A673 (cell line): ENCODE measurements at regions of chr10 and their contacts with region 1.

Region 1: DNA sequence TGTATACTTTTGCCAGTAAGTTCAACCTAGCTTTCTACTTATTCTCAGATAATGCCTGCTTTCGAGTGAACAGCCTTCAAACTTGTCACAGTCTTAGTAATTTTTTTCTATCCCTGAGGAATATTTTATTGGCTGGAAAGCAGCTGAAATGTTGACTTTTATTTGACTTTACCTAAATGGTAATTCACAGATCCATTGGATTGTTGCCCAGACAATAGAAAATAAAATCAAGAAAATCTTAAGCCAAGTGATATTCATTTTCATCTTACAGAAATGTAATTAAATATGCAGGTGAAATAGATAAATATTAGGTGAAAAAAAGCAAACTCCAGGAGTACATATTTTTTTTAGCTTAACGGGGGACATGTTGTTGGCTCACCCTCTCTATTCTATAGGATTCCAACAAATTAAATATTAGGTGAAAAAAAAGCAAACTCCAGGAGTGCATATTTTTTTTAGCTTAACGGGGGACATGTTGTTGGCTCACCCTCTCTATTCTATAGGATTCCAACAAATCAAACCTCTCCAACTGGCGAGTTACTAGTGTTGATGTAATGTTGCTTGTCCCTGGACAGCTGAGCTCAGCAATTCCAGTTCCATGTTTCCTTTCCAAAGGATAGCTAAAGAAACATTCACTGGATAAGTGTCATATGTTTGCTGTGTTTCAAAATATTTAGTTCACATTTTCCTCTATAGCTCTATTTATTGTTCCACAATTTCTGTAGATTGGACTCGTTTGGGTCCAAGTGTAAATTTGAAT is 4.2 kb downstream of the TMEM26 start:
- DNase-seq: no peak
- H3K4me3 ChIP-seq: no peak overlapping the region
- H3K27ac ChIP-seq: no peak overlapping the region
- H3K4me1 ChIP-seq: peaks cover 10% of the 10 kb centered on the region
- H3K27me3 ChIP-seq: no peaks in the 10 kb centered on the region
- CTCF ChIP-seq: no peak

Region 2: DNA sequence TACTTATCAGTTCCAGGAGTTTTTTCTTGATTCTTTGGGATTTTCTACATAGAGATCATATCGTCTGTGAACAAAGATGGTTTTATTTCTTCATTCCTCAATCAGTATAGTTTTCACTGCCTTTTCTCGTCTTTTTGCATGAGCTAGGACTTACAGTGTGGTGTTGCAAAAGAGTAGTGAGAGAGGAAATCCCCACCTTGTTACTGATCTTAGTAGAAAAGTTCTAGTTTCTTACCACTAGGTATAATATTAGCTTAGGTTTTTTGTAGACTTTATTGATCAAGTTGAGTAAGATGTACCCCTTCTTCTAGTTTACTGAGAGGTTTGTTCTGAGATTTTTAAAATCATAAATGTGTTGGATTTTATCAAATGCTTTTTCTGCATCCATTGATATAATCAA is 119.2 kb before region 1 on chr10:
- CTCF ChIA-PET with region 1: no interaction called
- POLR2A ChIA-PET with region 1: interaction called, 14 read pairs
- intact Hi-C with region 1: no loop called
- DNase-seq: no peak
- H3K4me3 ChIP-seq: no peak overlapping the region
- H3K27ac ChIP-seq: no peak overlapping the region
- H3K4me1 ChIP-seq: peaks cover 5% of the 10 kb centered on the region
- H3K27me3 ChIP-seq: no peaks in the 10 kb centered on the region
- CTCF ChIP-seq: no peak